Motor neuron (in vitro differentiated cells): ENCODE measurements at regions of chr19 and their contacts with region 1.

Region 1: DNA sequence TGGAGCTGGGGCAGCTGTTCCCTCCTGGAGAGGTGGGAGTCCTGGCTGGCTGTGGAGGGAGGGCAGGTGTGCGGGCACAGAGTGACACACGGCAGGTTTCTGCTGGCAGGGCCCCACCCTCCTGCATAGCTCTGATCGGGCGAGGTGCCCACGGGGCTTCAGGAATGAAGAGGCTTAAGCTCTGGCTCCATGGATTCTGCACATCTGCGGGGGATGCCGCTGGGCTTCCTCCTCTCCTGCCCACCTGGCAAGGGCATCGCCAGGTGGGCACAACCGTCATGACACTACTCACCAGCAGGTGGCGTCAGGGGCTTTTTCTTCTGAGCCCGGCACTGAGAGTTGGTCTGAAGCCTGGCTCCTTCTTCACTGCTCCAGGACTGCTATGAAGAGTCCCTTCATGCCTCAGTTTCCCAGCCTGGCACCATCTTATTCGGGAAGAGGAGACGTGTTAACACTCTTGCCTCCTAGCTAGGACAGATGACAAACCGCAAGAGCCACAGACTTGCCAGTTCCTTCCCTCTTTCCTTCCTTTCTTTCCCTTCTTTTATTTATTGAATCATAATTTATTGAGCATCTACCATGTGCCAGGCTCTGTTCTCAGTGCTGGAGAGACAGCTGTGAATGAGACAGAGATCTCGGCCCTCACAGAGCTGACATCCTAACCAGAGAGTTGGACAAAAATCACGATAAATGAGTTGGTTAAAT is 15.2 kb upstream of the PAK4 start:
- ATAC-seq: peak; percentile 61 to 86 (median 70)
- H3K4me3 ChIP-seq: no peak overlapping the region
- H3K27ac ChIP-seq: no peak overlapping the region
- H3K4me1 ChIP-seq: no peaks in the 10 kb centered on the region

Region 2: GRCh38 chr19:39307046-39307823 is 196.8 kb after region 1 on chr19:
- in situ Hi-C with region 1: loop called in 1 of 9 experiments (anchors 25 kb)
- ATAC-seq: peak; percentile 70 to 90 (median 82)
- H3K4me3 ChIP-seq: peak overlapping the region in 4 of 5 donors; percentile 10 to 28 (median 18)
- H3K27ac ChIP-seq: no peak overlapping the region
- H3K4me1 ChIP-seq: peaks cover 0 to 3% of the 10 kb centered on the region in 2 donors

Region 3: GRCh38 chr19:39328046-39328705 is 217.8 kb after region 1 on chr19:
- in situ Hi-C with region 1: loop called in 7 of 9 experiments (anchors 10 to 25 kb)
- ATAC-seq: peak; percentile 70 to 85 (median 80)
- H3K4me3 ChIP-seq: no peak overlapping the region
- H3K27ac ChIP-seq: no peak overlapping the region
- H3K4me1 ChIP-seq: peaks cover 11 to 13% of the 10 kb centered on the region in 2 donors

Region 4: DNA sequence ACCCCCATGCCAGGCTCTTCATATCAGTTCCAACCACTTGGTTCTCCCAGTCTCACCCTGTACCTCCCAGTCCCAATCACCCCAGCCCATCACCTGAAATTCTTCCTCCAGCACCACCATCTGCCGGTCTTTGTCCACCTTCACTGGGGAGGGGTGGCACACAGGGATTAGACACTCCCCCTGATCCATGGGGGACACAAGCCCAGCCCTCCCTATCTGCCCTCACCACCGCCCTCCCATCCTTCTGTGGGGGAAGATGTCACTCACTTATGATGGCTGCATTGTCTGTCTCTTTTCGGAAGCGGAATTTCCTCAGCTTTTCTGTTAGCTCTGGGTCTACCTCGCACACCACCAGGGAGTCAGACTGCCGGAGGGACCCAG is 224.7 kb after region 1 on chr19:
- in situ Hi-C with region 1: loop called in 3 of 9 experiments (anchors 10 to 25 kb)
- ATAC-seq: no peak
- H3K4me3 ChIP-seq: no peak overlapping the region
- H3K27ac ChIP-seq: no peak overlapping the region
- H3K4me1 ChIP-seq: no peaks in the 10 kb centered on the region

Region 5: GRCh38 chr19:39341719-39342604 is 231.5 kb after region 1 on chr19 and contains the start of gene SAMD4B:
- in situ Hi-C with region 1: loop called in 3 of 9 experiments (anchors 10 to 25 kb)
- ATAC-seq: peak; percentile 85 to 92 (median 90)
- H3K4me3 ChIP-seq: peak within 1 kb of the TSS; percentile 64 to 99 (median 91)
- H3K27ac ChIP-seq: peak within 1 kb of the TSS; percentile 80 to 83
- H3K4me1 ChIP-seq: peaks cover 11% of the 10 kb centered on the region in 2 donors
- total RNA-seq, gene SAMD4B: 24.1 to 124 (median 64.9) TPM